ENCODE measurements at regions of chr10 and their contacts with region 1.

Region 1: GRCh38 chr10:11224792-11225416 is 207.2 kb downstream of the CELF2 start:
- DNase-seq: no peak
- H3K4me3 Mint-ChIP-seq: no peak overlapping the region
- H3K27ac Mint-ChIP-seq: peak overlapping the region; percentile 89
- H3K4me1 Mint-ChIP-seq: peaks cover 88% of the 10 kb centered on the region
- H3K27me3 Mint-ChIP-seq: no peaks in the 10 kb centered on the region

Region 2: DNA sequence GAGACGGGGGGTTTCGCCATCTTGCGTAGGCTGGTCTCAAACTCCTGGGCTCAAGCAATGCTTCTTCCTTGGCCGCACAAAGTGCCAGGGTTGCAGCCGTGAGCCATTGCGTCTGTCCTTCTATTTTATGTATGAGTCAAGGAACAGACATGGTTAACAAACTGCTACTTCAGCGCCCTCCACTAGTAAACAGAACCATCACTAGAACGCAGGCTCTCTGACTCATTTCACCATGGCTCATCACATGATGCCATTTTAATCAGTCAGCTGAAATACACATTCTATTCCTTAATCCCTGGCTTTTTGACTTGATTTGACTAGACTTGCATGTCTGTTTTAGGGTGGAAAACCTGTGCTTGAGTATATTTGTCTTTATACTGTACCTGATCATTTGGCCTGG is 165.9 kb before region 1 on chr10:
- CTCF ChIA-PET with region 1: no interaction called
- POLR2A ChIA-PET with region 1: no interaction called
- DNase-seq: no peak
- H3K4me3 Mint-ChIP-seq: no peak overlapping the region
- H3K27ac Mint-ChIP-seq: no peak overlapping the region
- H3K4me1 Mint-ChIP-seq: no peaks in the 10 kb centered on the region
- H3K27me3 Mint-ChIP-seq: peaks cover 3% of the 10 kb centered on the region

Region 3: DNA sequence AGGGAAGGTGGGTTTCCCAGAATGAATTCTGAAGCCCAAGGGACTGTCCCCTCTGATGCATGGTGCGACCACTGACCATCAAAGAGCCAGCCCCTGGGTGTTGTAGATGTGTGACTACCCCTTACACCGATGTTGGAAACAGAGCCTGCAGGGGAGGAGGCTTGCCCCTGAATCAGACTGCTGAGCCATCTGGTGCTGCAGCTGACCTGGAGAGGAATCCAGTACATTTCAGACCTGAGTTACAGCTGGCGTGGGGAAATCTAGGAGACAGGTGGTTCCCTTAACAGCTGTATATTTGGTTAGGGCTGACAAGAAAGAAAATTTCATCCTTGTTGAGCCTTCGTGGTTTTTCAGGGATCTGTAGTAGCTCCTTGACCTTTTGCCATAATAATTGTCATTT is 11.8 kb before region 1 on chr10:
- CTCF ChIA-PET with region 1: interaction called, 18 read pairs
- POLR2A ChIA-PET with region 1: no interaction called
- DNase-seq: no peak
- H3K4me3 Mint-ChIP-seq: no peak overlapping the region
- H3K27ac Mint-ChIP-seq: no peak overlapping the region
- H3K4me1 Mint-ChIP-seq: peaks cover 91% of the 10 kb centered on the region
- H3K27me3 Mint-ChIP-seq: no peaks in the 10 kb centered on the region

Region 4: DNA sequence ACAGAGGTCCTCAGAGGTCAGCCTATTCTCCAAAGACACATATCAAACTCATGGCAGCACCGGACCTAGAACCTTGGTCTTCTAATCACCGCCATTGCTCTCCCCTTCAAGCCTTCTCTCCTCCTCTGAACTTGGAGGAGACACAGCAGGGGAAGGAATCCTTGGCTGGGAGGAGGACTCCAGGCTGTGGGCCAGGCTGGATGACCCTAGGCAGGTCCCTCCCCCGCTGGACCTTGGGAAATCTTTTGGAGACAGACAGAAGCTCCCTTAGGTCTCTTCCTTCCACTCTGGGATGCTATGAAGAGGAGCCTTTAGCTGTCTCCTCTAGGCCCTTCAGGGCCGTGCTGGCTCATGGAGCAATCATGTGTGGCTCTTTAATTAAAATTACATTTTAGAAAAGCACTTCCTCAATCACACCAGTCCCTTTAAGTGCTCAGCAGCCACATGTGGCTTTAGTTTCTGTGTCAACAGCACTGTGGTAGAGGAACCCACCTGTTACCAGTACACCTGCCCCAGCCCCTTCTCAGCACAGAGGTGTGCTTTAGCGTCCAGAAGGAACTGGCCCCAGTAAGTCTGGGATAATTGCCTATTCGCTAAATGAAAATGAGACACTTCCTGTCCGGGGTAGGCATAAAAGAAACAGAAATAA is 31.0 kb after region 1 on chr10:
- CTCF ChIA-PET with region 1: no interaction called
- POLR2A ChIA-PET with region 1: no interaction called
- DNase-seq: no peak
- H3K4me3 Mint-ChIP-seq: no peak overlapping the region
- H3K27ac Mint-ChIP-seq: peak overlapping the region; percentile 57
- H3K4me1 Mint-ChIP-seq: peaks cover 60% of the 10 kb centered on the region
- H3K27me3 Mint-ChIP-seq: no peaks in the 10 kb centered on the region

Region 5: GRCh38 chr10:11488126-11488525 is 263.2 kb after region 1 on chr10:
- CTCF ChIA-PET with region 1: no interaction called
- POLR2A ChIA-PET with region 1: no interaction called
- DNase-seq: no peak
- H3K4me3 Mint-ChIP-seq: no peak overlapping the region
- H3K27ac Mint-ChIP-seq: no peak overlapping the region
- H3K4me1 Mint-ChIP-seq: peaks cover 3% of the 10 kb centered on the region
- H3K27me3 Mint-ChIP-seq: no peaks in the 10 kb centered on the region

Measured in activated CD4-positive, alpha-beta T cell treated with anti-CD3 and anti-CD28 coated beads, Interleukin-2, amount 10 ng/mL, durations not matched to agents 7 days and 5 days (primary cell).